Activated naive CD4-positive, alpha-beta T cell treated with anti-CD3 and anti-CD28 coated beads, Interleukin-2, amount 10 ng/mL, durations not matched to agents 7 days and 5 days (primary cell): ENCODE measurements at regions of chr2 and their contacts with region 1.

Region 1: GRCh38 chr2:195575879-195576401 is 81.1 kb upstream of the SLC39A10 start:
- DNase-seq: no peak
- H3K4me3 Mint-ChIP-seq: peak overlapping the region; percentile 31
- H3K27ac Mint-ChIP-seq: peak overlapping the region; percentile 77
- H3K4me1 Mint-ChIP-seq: peaks cover 75% of the 10 kb centered on the region
- H3K27me3 Mint-ChIP-seq: no peaks in the 10 kb centered on the region

Region 2: DNA sequence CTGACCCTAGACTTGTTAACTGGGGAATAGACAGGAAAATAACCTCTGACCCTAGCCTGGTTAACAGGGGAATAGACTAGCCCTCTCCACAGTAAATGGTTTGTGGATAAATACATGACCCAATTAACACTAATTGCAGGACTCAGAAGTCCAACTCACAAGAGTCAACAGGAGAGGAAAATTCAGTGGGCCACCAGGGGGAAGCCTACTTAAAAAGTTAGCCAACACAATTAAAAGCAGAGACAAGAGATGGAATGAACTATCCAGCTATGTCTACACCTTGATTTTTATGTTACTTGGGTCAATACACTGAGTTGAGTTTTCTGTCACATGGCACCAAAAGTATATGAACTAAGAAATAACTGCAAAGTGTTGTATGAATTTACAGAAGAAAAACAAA is 77.8 kb before region 1 on chr2:
- CTCF ChIA-PET with region 1: interaction called, 14 read pairs
- DNase-seq: peak; percentile 63
- H3K4me3 Mint-ChIP-seq: no peak overlapping the region
- H3K27ac Mint-ChIP-seq: peak overlapping the region; percentile 5
- H3K4me1 Mint-ChIP-seq: peaks cover 46% of the 10 kb centered on the region
- H3K27me3 Mint-ChIP-seq: no peaks in the 10 kb centered on the region

Region 3: GRCh38 chr2:195586062-195586714 is 10.2 kb after region 1 on chr2:
- CTCF ChIA-PET with region 1: interaction called, 15 read pairs
- DNase-seq: no peak
- H3K4me3 Mint-ChIP-seq: no peak overlapping the region
- H3K27ac Mint-ChIP-seq: no peak overlapping the region
- H3K4me1 Mint-ChIP-seq: peaks cover 2% of the 10 kb centered on the region
- H3K27me3 Mint-ChIP-seq: no peaks in the 10 kb centered on the region

Region 4: GRCh38 chr2:195601361-195601760 is 25.4 kb after region 1 on chr2:
- CTCF ChIA-PET with region 1: no interaction called
- DNase-seq: no peak
- H3K4me3 Mint-ChIP-seq: no peak overlapping the region
- H3K27ac Mint-ChIP-seq: no peak overlapping the region
- H3K4me1 Mint-ChIP-seq: peaks cover 2% of the 10 kb centered on the region
- H3K27me3 Mint-ChIP-seq: no peaks in the 10 kb centered on the region